Mammary epithelial cell (primary cell): ENCODE measurements at regions of chr17 and their contacts with region 1.

Region 1: DNA sequence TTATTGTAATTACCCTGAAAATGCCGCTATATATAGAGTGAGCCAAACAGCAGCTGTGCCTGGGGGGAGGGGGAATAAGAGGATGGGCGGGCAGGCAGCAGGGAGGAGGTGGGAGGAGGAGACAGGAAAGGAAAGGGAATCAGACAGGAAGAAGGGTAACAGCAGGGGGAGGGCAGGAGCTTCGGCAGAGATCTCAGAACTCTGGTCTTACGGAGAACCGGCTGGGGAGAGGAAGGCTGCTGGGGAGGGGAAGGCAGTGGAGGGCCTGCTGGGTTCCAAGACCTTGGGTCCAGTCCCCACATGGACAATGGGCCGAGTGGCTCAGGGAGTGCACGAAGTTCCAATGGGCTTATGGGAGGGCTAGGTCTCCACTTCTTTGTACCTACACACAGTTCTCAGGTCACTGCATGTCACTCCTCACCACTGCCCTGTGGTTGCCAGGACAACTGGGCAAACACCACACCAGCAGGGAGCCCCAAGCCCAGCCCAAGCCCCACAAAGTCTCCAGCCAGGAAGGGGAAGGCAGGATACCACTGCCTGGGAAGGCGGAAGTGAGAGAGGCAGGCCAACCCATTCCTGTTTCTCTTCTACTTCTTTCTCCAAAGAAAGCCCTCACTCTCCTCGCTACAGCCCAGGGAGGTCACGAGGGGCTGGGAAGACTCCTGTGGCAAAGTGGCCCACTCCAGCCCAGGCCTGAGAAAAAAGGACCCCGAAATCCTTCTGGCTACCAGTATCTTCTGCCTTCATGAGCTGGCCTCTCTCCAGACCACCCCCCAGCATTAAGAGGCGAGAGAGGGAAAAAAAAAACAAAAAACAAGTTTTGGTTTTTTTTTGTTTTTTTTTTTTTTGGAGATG is 25.3 kb downstream of the G6PC3 start:
- DNase-seq: peak; percentile 68
- H3K4me3 ChIP-seq: peak overlapping the region in 2 of 3 experiments; percentile 12 to 28
- H3K27ac ChIP-seq: peak overlapping the region; percentile 76
- H3K4me1 ChIP-seq: peaks cover 18% of the 10 kb centered on the region
- H3K27me3 ChIP-seq: no peaks in the 10 kb centered on the region
- CTCF ChIP-seq: peak in 1 of 2 donors; percentile 25

Region 2: GRCh38 chr17:44024271-44024663 is 71.6 kb before region 1 on chr17:
- CTCF ChIA-PET with region 1: no interaction called
- dilution Hi-C with region 1: loop called (anchors 5 kb)
- in situ Hi-C with region 1: no loop called
- intact Hi-C with region 1: no loop called
- DNase-seq: no peak
- H3K4me3 ChIP-seq: no peak overlapping the region
- H3K27ac ChIP-seq: no peak overlapping the region
- H3K4me1 ChIP-seq: no peaks in the 10 kb centered on the region
- H3K27me3 ChIP-seq: no peaks in the 10 kb centered on the region
- CTCF ChIP-seq: no peak

Region 3: DNA sequence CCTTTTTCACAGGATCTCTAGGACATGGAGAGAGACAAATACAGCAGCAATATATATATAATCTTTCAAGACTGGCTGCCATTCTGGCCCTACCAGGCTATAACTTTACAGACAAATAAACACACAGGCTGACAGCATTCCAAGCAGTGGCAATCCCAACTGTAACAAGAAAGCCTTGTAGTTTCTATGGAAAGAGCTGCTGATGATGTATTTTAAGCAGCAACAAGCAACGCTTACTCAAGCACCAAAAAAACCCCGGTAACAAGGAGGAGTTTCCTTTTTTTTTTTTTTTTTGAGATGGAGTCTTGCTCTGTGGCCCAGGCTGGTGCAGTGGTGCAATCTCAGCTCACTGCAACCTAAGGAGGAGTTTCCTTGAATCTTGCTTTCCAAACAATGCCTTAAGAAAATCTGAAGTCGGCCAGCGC is 52.6 kb before region 1 on chr17:
- CTCF ChIA-PET with region 1: no interaction called
- dilution Hi-C with region 1: no loop called
- in situ Hi-C with region 1: no loop called
- intact Hi-C with region 1: no loop called
- DNase-seq: no peak
- H3K4me3 ChIP-seq: no peak overlapping the region
- H3K27ac ChIP-seq: no peak overlapping the region
- H3K4me1 ChIP-seq: peaks cover 27% of the 10 kb centered on the region
- H3K27me3 ChIP-seq: no peaks in the 10 kb centered on the region
- CTCF ChIP-seq: no peak

Region 4: DNA sequence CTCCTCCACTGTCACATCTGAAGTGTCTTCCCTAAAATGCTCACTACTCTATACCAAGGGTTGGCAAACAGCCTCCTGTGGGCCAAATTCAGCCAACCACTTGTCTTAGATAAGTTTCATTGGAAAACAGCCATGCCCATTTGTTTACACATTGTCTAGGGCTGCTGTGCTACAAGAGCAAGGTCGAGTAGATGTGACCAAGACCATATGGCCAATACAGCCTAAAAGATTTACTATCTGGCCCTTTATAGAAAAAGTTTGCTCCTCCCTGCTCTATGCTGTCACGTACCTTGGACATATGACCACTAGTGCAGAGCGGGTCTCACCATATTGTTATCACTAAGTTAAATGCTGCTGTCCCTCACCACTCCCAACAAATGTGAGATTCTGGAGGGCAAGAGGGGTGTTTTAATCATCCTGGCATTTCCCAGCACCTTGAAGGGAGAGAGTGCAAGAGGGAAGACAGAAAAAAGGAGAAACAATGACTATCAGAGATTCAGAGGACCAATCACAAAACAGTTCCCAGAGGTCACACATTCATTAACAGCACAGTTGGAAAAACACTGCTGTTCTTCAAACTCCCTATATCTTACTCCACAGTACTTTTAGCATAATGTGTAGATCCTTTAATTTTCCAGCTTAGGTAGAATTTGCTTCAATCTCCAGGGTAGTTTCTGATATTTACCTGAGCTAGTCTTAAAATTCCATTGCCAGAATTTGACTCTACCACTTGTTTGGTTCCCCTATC is 42.6 kb before region 1 on chr17:
- CTCF ChIA-PET with region 1: no interaction called
- dilution Hi-C with region 1: loop called (anchors 5 kb)
- in situ Hi-C with region 1: no loop called
- intact Hi-C with region 1: no loop called
- DNase-seq: no peak
- H3K4me3 ChIP-seq: no peak overlapping the region
- H3K27ac ChIP-seq: no peak overlapping the region
- H3K4me1 ChIP-seq: no peaks in the 10 kb centered on the region
- H3K27me3 ChIP-seq: no peaks in the 10 kb centered on the region
- CTCF ChIP-seq: no peak

Region 5: DNA sequence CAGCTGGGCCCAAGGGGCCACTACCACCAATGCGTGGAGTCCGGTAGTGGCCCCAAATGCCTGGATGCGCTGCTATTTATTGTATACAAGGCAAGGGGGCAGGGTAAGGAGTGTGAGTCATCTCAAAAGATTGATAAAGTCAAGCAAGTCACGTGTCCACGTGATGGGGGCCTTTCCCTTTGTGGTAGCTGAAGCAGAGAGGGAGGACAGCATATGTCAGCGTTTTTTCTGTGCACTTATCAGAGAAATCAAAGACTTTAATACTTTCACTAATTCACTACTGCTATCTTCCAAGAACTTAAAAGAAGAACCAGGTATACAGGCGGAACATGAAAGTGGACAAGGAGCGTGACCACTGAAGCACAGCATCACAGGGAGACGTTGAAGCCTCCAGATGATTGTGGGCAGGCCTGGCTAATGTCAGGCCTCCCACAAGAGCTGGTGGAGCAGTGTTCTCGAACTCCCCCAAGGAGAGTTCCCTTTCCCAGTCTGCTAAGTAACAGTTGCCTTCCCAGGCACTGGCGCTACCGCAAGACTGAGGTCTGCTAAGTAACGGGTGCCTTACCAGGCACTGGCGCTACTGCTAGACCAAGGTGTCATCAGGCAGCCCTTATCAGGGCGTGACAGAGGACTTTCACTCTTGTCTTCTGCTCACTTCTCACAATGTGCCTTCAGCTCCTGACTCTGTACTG is 63.8 kb after region 1 on chr17:
- CTCF ChIA-PET with region 1: no interaction called
- dilution Hi-C with region 1: loop called (anchors 5 kb)
- in situ Hi-C with region 1: no loop called
- intact Hi-C with region 1: no loop called
- DNase-seq: no peak
- H3K4me3 ChIP-seq: no peak overlapping the region
- H3K27ac ChIP-seq: no peak overlapping the region
- H3K4me1 ChIP-seq: no peaks in the 10 kb centered on the region
- H3K27me3 ChIP-seq: no peaks in the 10 kb centered on the region
- CTCF ChIP-seq: no peak

Region 6: DNA sequence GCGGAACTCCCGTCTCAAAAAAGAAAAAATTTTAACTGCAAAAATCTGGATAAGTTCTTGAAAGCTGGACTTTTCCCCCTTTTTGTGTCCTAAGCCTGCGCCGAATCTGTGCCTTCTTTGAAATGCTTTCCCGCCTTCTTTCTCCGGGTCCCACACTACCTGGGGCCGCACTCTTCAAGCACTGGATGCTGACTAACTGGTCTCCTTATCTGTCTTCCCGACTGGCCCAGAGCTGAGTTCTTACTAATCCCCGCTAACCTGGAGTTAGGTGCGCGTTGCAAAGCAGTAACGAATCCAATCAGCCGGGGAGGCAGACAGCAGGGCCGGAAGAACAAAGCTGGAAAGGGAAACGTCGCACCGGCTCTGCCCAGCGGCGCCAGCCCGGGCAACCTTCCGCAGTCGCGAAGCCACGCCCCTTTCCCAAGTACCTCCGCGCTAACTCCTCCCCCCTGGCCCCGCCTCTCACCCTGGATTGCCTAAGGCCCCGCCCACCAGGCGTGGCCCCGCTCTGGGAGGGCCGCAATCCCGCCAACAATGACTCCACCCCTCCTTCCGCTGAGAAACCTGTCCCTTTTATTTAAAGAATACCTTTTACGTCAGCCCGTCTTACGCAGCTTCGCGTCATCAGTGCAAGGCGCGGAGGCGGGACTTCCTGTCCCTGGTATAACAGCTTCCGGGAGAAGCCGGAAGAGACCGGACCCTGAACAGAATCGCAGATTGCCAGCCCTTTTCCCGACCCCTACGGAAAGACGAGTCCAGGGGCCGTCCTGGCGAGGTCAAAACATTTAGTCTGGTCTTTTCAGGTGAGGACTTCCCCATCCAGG is 90.7 kb after region 1 on chr17 and contains the start of gene TMUB2:
- CTCF ChIA-PET with region 1: no interaction called
- dilution Hi-C with region 1: no loop called
- in situ Hi-C with region 1: loop called in 1 of 2 experiments (anchors 25 kb)
- intact Hi-C with region 1: no loop called
- DNase-seq: peak; percentile 99
- H3K4me3 ChIP-seq: peak within 1 kb of the TSS; percentile 87 to 96 (median 95)
- H3K27ac ChIP-seq: peak within 1 kb of the TSS; percentile 97
- H3K4me1 ChIP-seq: peaks cover 10% of the 10 kb centered on the region
- H3K27me3 ChIP-seq: no peaks in the 10 kb centered on the region
- CTCF ChIP-seq: no peak
- total RNA-seq, gene TMUB2: 25.2 to 31.8 TPM

Region 7: GRCh38 chr17:44247440-44247841 is 151.6 kb after region 1 on chr17:
- CTCF ChIA-PET with region 1: no interaction called
- dilution Hi-C with region 1: no loop called
- in situ Hi-C with region 1: no loop called
- intact Hi-C with region 1: no loop called
- DNase-seq: no peak
- H3K4me3 ChIP-seq: no peak overlapping the region
- H3K27ac ChIP-seq: no peak overlapping the region
- H3K4me1 ChIP-seq: no peaks in the 10 kb centered on the region
- H3K27me3 ChIP-seq: peaks cover 2% of the 10 kb centered on the region
- CTCF ChIP-seq: no peak